Panc1 (cell line): ENCODE measurements at regions of chr10 and their contacts with region 1.

Region 1: DNA sequence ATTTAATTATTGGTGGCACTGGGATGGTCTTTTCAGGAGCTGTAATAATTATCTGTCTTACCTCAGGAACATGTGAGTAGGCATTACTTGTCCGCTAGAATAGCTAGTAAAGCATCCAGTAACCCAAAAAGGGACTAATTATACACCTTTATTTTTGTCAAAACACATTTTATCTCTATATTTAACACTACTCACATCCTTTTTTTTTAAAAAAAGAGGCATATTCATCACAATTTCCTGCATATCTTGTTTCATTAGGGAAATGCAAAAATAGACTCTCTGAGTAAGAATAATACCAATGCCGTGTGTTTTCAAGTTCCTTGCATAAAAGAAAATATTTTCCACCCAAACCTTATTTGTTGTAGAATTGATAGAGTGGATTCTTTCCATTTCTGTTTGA is 99.5 kb downstream of the VTI1A start:
- DNase-seq: no peak
- ATAC-seq: no peak
- H3K4me3 ChIP-seq: no peak overlapping the region
- H3K27ac ChIP-seq: no peak overlapping the region
- H3K4me1 ChIP-seq: no peaks in the 10 kb centered on the region
- H3K27me3 ChIP-seq: no peaks in the 10 kb centered on the region
- CTCF ChIP-seq: no peak

Region 2: DNA sequence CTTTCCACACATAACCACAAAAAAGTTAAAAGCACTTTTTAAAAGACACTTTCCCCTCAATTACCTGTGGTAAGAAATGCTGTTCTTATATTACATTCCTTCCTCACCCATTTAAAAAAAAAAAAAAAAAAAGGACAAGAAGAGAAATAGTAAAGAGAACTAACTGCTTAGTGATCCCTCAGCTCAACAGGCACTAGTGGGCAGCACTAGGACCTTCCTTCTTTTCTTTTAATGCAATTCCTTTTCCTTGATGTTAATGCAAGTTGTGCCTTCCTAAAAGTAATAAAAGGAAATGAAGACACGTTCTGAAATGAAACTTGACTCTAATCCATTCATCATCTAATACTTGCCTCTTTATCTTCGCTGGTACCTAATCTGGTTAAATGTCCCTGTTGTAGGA is 593.2 kb after region 1 on chr10:
- CTCF ChIA-PET with region 1: no interaction called
- POLR2A ChIA-PET with region 1: interaction called, 12 read pairs
- in situ Hi-C with region 1: no loop called
- intact Hi-C with region 1: no loop called
- DNase-seq: no peak
- ATAC-seq: no peak
- H3K4me3 ChIP-seq: no peak overlapping the region
- H3K27ac ChIP-seq: no peak overlapping the region
- H3K4me1 ChIP-seq: no peaks in the 10 kb centered on the region
- H3K27me3 ChIP-seq: no peaks in the 10 kb centered on the region
- CTCF ChIP-seq: peak; percentile 49; the same call in 1 of the 2 replicates